ENCODE measurements at regions of chr10 and their contacts with region 1.

Region 1: DNA sequence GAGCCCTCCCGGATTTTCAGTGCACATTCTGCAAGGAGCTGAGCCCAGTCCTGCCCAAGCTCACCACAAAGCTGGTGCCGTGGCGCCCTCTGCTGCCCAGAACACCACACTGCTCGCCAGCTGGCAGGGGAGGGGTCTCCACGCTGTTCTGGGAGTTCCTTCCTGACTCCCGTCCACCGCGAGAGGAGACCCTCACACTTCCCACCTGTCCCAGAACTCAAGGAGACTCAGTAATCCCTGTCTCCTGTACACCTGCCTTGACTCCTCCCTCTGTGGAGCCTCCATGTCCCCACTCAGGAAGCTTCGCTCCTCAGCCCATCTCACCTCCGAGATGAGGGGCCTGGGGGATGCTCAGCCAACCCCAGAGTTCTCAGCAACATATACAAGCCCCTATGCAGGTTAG is 11.3 kb downstream of the C10orf105 start:
- DNase-seq: peak; percentile 68
- ATAC-seq: peak; percentile 40
- H3K4me3 Mint-ChIP-seq: no peak overlapping the region
- H3K27ac Mint-ChIP-seq: no peak overlapping the region
- H3K4me1 Mint-ChIP-seq: peaks cover 25% of the 10 kb centered on the region
- H3K27me3 Mint-ChIP-seq: no peaks in the 10 kb centered on the region

Region 2: DNA sequence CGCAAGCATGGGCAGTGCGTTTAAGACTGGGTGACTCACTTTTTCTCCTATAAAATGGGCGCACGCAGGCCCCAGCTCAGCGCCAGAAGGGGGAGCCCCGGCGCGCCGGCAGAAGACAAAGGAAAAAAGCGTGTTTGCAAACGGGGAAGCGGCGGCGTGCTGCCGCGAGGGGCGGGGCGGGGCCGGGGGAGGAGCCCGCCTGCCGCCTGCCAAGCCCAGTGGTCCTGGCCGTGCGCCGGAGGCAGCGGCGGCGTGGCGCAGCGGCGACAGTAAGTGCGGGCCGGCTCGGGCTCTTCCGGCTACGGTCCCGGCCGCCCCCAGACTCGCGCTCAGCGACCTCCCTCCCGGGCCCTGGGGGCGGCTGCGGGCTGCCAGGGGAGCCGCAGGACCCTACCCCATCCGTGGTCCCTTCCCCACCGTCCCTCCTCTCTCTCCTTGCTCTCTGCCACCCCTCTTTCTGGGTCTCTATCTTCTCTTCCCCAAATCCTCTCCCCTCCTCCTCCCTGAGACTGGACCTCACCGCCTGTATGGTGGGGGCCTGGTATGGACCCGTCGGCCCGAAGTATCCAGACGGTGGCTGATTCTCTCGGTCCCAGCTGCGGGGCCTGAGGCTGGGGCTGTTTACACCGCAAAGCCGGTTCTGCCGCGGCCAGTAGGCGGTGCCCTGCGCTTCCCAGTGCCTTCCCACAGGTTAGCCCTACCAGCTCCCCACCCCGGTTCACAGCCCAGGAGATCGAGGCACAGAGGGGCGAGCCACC is 389.1 kb before region 1 on chr10 and contains the start of gene SLC29A3:
- CTCF ChIA-PET with region 1: interaction called, 16 read pairs
- DNase-seq: peak; percentile 91
- ATAC-seq: peak; percentile 93
- H3K4me3 Mint-ChIP-seq: peak within 1 kb of the TSS; percentile 86
- H3K27ac Mint-ChIP-seq: peak within 1 kb of the TSS; percentile 66
- H3K4me1 Mint-ChIP-seq: peaks cover 34% of the 10 kb centered on the region
- H3K27me3 Mint-ChIP-seq: no peaks in the 10 kb centered on the region
- total RNA-seq, gene SLC29A3: 3.4 to 5.1 TPM

Region 3: DNA sequence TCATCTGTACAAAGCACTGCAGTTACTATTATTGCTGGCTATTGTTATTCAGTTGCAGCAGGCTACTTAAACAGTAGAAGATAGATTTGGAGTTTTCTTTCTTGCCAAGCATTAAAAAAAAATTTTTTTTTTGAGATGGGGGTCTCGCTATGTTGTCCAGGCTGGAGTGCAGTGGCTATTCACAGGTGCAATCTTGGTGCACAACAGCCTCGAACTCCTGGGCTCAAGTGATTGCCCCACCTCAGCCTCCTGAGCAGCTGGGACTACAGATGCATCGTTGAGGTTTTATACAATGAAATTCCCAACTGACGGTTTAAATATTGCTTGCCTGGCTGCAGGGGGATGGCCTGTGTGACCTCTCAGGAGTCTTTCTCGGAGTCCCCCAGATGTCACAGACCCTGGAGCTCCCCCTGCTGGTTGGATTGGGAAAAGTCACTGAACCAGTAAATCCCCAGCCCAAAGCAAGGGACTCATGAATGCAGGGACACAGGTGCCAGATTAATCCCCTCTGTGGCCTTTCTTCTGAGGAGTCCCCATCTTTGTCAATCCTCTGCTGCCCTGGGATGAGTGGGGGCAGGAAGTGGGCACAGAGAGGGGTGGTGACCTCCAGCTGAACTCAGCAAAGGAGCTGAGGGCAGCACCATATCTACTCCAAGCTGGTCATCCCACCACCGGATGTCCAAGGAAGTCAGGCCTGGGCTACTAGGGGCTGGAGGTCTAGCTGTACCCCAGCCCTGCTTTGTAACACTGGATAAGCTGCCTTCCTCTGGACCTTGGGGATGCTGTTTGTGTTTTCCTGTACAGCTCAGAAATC is 138.3 kb before region 1 on chr10:
- CTCF ChIA-PET with region 1: interaction called, 19 read pairs
- DNase-seq: peak; percentile 83
- ATAC-seq: peak; percentile 62
- H3K4me3 Mint-ChIP-seq: no peak overlapping the region
- H3K27ac Mint-ChIP-seq: no peak overlapping the region
- H3K4me1 Mint-ChIP-seq: no peaks in the 10 kb centered on the region
- H3K27me3 Mint-ChIP-seq: peaks cover 1% of the 10 kb centered on the region

Region 4: GRCh38 chr10:71719042-71719441 is 10.7 kb after region 1 on chr10:
- CTCF ChIA-PET with region 1: interaction called, 42 read pairs
- DNase-seq: no peak
- ATAC-seq: no peak
- H3K4me3 Mint-ChIP-seq: no peak overlapping the region
- H3K27ac Mint-ChIP-seq: no peak overlapping the region
- H3K4me1 Mint-ChIP-seq: peaks cover 13% of the 10 kb centered on the region
- H3K27me3 Mint-ChIP-seq: peaks cover 3% of the 10 kb centered on the region

Region 5: DNA sequence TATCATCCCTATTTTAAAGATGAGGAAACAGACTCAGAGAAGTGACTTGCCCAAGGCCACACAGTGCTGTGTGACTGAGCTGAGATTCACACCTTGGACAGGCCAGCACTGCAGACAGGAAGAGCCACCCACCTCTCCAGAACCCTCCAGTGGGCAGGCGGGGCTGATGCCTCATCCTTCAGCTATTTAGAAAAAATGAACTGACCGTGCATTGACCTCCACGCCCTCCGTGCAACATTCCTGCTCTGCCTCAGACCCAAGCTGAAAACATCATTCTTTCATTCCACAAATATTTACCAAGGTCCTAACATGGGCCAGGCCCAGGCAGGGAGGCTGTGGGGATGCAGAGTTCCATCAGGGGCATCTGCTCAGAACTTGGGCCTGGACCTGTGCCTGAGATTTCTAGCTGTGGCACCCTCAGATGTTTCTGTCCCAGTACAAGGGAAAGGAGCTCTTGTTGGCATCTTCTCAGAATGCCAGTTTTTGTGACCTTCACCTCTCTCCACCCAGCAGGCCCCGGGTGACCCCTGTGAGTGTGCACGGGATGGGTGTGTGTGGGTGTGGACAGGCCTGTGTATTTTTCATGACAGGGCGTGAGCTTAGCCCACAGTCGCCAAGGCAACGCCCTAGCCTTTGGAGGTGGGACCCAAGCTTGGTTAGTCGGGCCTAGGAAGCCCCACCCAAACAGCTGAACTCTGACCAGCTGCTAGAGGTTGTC is 58.6 kb after region 1 on chr10:
- CTCF ChIA-PET with region 1: interaction called, 61 read pairs
- DNase-seq: peak; percentile 70
- ATAC-seq: no peak
- H3K4me3 Mint-ChIP-seq: no peak overlapping the region
- H3K27ac Mint-ChIP-seq: peak overlapping the region; percentile 90
- H3K4me1 Mint-ChIP-seq: peaks cover 61% of the 10 kb centered on the region
- H3K27me3 Mint-ChIP-seq: no peaks in the 10 kb centered on the region

Region 6: GRCh38 chr10:72483471-72483870 is 775.2 kb after region 1 on chr10:
- CTCF ChIA-PET with region 1: no interaction called
- DNase-seq: no peak
- ATAC-seq: no peak
- H3K4me3 Mint-ChIP-seq: no peak overlapping the region
- H3K27ac Mint-ChIP-seq: no peak overlapping the region
- H3K4me1 Mint-ChIP-seq: no peaks in the 10 kb centered on the region
- H3K27me3 Mint-ChIP-seq: no peaks in the 10 kb centered on the region

Measured in activated CD8-positive, alpha-beta memory T cell treated with anti-CD3 and anti-CD28 coated beads, Interleukin-2, amount 10 ng/mL, durations not matched to agents 7 days and 5 days (primary cell).